Activated CD4-positive, alpha-beta memory T cell treated with anti-CD3 and anti-CD28 coated beads for 36 hours (primary cell): ENCODE measurements at regions of chr5 and their contacts with region 1.

Region 1: GRCh38 chr5:40688127-40688761 is 8.5 kb downstream of the PTGER4 start:
- DNase-seq: peak; percentile 91
- H3K4me3 Mint-ChIP-seq: peak overlapping the region; percentile 93
- H3K27ac Mint-ChIP-seq: peak overlapping the region; percentile 97
- H3K4me1 Mint-ChIP-seq: peaks cover 65% of the 10 kb centered on the region
- H3K27me3 Mint-ChIP-seq: no peaks in the 10 kb centered on the region

Region 2: GRCh38 chr5:40165794-40166728 is 522.2 kb before region 1 on chr5:
- CTCF ChIA-PET with region 1: interaction called, 3 read pairs
- POLR2A ChIA-PET with region 1: no interaction called
- intact Hi-C with region 1: loop called (anchors 2 kb)
- DNase-seq: peak; percentile 32
- H3K4me3 Mint-ChIP-seq: no peak overlapping the region
- H3K27ac Mint-ChIP-seq: no peak overlapping the region
- H3K4me1 Mint-ChIP-seq: peaks cover 12% of the 10 kb centered on the region
- H3K27me3 Mint-ChIP-seq: peaks cover 2% of the 10 kb centered on the region

Region 3: DNA sequence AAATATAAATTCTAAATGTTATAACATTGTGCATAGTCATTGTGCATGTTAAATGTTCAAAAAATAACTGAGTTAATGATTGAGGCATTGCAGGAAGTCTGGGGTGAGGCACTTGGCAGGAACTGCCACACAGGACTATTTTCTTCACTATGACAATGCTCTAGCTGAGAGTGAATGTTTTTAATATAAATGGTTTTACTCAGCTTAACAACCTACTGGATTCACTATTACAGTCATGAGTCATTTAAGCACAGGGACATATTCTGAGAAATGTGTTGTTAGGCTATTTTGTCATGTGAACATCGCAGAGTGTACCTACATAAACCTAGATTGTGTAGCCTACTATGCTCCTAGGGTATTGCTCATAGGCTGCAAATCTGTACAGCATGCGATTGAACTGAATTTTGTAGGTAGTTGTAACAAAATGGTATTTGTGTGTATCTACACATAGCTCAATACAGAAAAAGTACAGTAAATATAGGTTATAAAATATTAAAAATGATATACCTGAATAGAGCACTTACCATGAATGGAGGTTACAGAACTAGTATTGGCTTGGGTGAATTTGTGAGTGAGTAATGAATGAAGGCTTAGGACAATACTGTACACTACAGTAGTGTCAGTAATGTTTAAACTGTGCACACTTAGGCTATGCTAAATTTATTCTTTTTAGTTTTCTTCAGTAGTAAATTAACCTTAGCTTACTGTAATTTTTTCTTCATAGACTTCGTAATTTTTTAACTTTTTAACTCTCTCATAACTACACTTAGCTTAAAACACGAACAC is 354.6 kb before region 1 on chr5:
- CTCF ChIA-PET with region 1: no interaction called
- POLR2A ChIA-PET with region 1: interaction called, 3 read pairs
- intact Hi-C with region 1: loop called (anchors 1 kb)
- DNase-seq: peak; percentile 56
- H3K4me3 Mint-ChIP-seq: no peak overlapping the region
- H3K27ac Mint-ChIP-seq: peak overlapping the region; percentile 33
- H3K4me1 Mint-ChIP-seq: peaks cover 50% of the 10 kb centered on the region
- H3K27me3 Mint-ChIP-seq: no peaks in the 10 kb centered on the region

Region 4: DNA sequence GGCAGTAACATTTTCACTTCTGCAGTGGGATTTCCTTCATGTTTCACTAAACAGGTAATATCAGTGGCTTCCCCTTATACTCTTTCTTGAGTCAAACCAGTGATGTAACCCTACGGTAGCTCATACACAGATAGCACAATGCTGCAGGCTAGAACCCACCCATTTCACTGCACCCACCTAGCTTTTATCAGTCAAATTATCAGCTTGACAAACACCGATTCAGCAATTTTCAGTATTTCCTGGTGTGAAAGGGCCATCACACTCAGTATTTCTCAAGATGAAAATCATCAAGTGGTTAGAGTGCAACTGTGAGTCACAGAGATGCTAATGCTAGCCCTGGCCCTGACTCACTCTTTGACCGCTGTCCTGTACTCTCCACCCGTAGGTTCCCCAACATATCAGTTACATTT is 250.8 kb before region 1 on chr5:
- CTCF ChIA-PET with region 1: interaction called, 4 read pairs
- POLR2A ChIA-PET with region 1: interaction called, 3 read pairs
- intact Hi-C with region 1: loop called (anchors 1 kb)
- DNase-seq: peak; percentile 58
- H3K4me3 Mint-ChIP-seq: no peak overlapping the region
- H3K27ac Mint-ChIP-seq: peak overlapping the region; percentile 70
- H3K4me1 Mint-ChIP-seq: peaks cover 74% of the 10 kb centered on the region
- H3K27me3 Mint-ChIP-seq: no peaks in the 10 kb centered on the region

Region 5: GRCh38 chr5:40578501-40579451 is 109.5 kb before region 1 on chr5:
- CTCF ChIA-PET with region 1: no interaction called
- POLR2A ChIA-PET with region 1: no interaction called
- intact Hi-C with region 1: loop called (anchors 2 kb)
- DNase-seq: peak; percentile 86
- H3K4me3 Mint-ChIP-seq: peak overlapping the region; percentile 48
- H3K27ac Mint-ChIP-seq: peak overlapping the region; percentile 66
- H3K4me1 Mint-ChIP-seq: peaks cover 38% of the 10 kb centered on the region
- H3K27me3 Mint-ChIP-seq: no peaks in the 10 kb centered on the region

Region 6: DNA sequence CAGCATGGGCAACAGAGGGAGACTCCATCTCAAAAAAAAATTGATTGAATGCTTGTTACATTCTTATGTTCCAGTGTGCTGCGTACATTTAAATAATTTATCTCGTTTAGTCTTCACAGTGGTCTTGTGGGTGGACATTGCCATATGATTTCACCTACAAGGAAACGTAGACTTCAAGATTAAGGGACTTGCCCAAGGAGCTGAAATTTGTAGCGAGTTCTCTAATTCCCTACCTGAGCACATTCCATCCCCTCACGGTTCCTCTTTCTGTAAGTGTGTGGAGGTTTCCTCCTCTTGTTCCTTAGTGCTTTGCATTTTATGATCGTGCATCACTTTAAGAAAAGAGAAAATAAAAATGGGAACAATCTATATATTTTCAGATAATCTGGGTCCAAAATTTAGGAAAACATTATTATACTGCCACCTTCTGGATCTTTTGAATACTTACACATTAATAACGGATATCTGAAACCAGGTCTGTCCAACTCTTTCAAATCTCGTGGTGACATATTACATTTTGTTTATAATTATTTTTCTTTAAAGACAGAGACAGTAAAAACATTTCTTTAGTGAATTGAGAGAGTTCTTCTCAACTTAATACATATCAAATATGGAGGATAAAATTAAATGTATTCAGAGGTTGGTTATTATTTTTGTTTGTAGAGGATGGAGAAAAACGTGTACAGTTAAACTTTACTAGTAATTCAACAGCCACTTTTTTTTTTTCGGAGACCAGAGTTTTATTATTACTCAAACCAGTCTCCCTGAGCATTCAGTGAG is 191.1 kb after region 1 on chr5:
- CTCF ChIA-PET with region 1: no interaction called
- POLR2A ChIA-PET with region 1: no interaction called
- intact Hi-C with region 1: loop called (anchors 5 kb)
- DNase-seq: no peak
- H3K4me3 Mint-ChIP-seq: no peak overlapping the region
- H3K27ac Mint-ChIP-seq: no peak overlapping the region
- H3K4me1 Mint-ChIP-seq: peaks cover 4% of the 10 kb centered on the region
- H3K27me3 Mint-ChIP-seq: peaks cover 1% of the 10 kb centered on the region

Region 7: DNA sequence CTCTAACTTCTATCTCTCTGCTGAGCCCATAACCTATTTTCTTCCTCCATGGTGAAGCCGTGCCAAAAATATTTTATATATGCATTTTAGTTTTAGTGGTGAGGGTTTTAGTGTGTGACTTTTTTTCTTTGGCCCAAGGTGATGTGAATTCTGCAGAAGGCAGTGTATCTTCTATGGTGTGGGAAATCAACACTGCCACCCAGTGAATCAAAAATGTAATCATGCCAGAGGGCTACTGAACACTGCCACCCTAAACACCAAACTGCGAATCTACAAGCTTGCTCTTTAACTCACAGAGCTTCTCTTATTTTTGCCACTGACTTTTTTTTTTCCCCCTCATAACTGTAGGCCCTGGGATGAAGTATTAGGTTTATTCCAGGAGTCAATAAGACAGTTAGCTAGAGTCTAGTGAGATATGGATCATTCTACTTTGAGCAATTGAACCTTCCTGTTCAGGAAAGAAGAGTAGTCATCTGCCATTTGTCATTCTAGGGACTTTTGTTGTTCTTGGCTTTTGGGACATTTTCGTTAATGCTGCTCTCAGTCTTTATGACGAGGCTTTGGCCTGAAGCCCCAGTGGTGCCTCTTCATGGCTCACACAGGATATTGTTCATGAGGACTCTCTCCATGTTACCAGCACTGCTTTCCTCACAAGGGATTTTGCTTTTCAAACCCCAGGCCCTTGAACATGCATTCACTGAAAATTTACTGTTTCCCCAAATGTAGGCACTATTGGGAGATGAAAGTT is 274.1 kb after region 1 on chr5:
- CTCF ChIA-PET with region 1: no interaction called
- POLR2A ChIA-PET with region 1: no interaction called
- intact Hi-C with region 1: no loop called
- DNase-seq: no peak
- H3K4me3 Mint-ChIP-seq: no peak overlapping the region
- H3K27ac Mint-ChIP-seq: no peak overlapping the region
- H3K4me1 Mint-ChIP-seq: no peaks in the 10 kb centered on the region
- H3K27me3 Mint-ChIP-seq: peaks cover 2% of the 10 kb centered on the region

Region 8: GRCh38 chr5:41143131-41143901 is 455.1 kb after region 1 on chr5:
- CTCF ChIA-PET with region 1: no interaction called
- POLR2A ChIA-PET with region 1: no interaction called
- intact Hi-C with region 1: no loop called
- DNase-seq: no peak
- H3K4me3 Mint-ChIP-seq: no peak overlapping the region
- H3K27ac Mint-ChIP-seq: no peak overlapping the region
- H3K4me1 Mint-ChIP-seq: no peaks in the 10 kb centered on the region
- H3K27me3 Mint-ChIP-seq: no peaks in the 10 kb centered on the region